Activated CD4-positive, alpha-beta T cell treated with anti-CD3 and anti-CD28 coated beads for 36 hours (primary cell): ENCODE measurements at regions of chr22 and their contacts with region 1.

Region 1: DNA sequence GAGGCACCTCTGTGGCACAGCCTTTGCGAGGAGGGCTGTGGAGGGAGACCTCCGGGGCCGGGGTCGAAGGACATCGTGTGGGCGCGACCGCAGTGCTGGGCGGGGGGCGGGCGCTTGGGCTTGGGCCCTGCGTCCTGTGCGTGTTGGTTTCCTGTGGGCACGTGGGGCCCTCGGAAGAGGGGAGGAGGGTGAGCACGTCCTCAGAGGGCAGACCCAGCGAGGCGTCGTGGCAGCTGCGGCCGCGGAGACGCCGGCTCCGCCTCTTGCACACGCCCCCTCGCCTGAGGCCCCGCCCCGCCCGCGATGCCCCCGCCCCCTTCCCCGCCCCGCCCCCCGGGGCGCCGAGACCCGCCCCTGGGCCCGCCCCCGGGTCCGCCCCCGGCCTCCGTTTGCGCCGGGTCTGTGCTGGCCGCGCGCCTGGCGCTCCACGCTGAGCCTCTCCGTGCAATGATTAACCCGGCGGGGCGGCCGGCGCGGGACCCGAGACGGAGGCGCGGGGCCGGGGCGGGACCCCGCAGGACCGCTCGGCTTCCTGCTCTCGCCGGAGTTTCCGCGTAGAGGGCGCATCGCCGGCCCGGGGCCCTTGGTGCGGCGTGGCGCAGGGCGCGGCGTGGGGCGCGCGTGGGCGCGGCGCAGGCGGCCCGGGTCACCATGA is at the start of gene PRR5:
- DNase-seq: peak; percentile 89
- ATAC-seq: peak; percentile 88
- H3K4me3 Mint-ChIP-seq: peak within 1 kb of the TSS; percentile 72
- H3K27ac Mint-ChIP-seq: no peak within 1 kb of the TSS
- H3K4me1 Mint-ChIP-seq: peaks cover 9% of the 10 kb centered on the region
- H3K27me3 Mint-ChIP-seq: no peaks in the 10 kb centered on the region
- total RNA-seq, gene PRR5: 13.6 TPM

Region 2: DNA sequence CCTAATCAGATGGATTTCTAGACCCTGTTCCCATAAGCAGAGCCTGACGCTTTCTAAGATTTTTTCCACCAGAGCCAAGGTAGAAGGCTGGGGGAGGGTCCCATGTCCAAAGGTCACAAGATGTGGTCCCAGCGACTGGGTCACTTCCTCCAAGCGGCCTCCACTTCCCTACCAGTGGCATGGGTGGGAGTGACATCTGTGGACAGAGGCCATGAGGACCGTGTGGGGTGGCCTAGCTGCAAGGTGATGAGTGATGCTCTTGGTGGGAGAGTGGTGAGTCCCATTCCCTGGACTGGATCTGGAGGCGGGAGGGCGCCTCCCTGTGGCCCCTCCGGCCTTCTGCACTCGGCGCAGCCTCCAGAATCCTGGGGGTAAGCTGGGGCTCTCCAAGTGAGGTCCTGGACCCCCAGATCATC is 32.4 kb before region 1 on chr22:
- CTCF ChIA-PET with region 1: interaction called, 4 read pairs
- POLR2A ChIA-PET with region 1: no interaction called
- intact Hi-C with region 1: loop called in 1 of 2 experiments (anchors 1 kb)
- DNase-seq: no peak
- ATAC-seq: no peak
- H3K4me3 Mint-ChIP-seq: peak overlapping the region; percentile 67
- H3K27ac Mint-ChIP-seq: no peak overlapping the region
- H3K4me1 Mint-ChIP-seq: peaks cover 37% of the 10 kb centered on the region
- H3K27me3 Mint-ChIP-seq: no peaks in the 10 kb centered on the region

Region 3: GRCh38 chr22:44735540-44736488 is 33.9 kb after region 1 on chr22:
- CTCF ChIA-PET with region 1: interaction called, 13 read pairs
- POLR2A ChIA-PET with region 1: no interaction called
- intact Hi-C with region 1: loop called (anchors 1 kb)
- DNase-seq: peak; percentile 90
- ATAC-seq: peak; percentile 81
- H3K4me3 Mint-ChIP-seq: no peak overlapping the region
- H3K27ac Mint-ChIP-seq: no peak overlapping the region
- H3K4me1 Mint-ChIP-seq: no peaks in the 10 kb centered on the region
- H3K27me3 Mint-ChIP-seq: no peaks in the 10 kb centered on the region

Region 4: GRCh38 chr22:44819971-44820631 is 118.2 kb after region 1 on chr22:
- CTCF ChIA-PET with region 1: no interaction called
- POLR2A ChIA-PET with region 1: no interaction called
- intact Hi-C with region 1: loop called in 1 of 2 experiments (anchors 1 kb)
- DNase-seq: no peak
- ATAC-seq: no peak
- H3K4me3 Mint-ChIP-seq: no peak overlapping the region
- H3K27ac Mint-ChIP-seq: no peak overlapping the region
- H3K4me1 Mint-ChIP-seq: no peaks in the 10 kb centered on the region
- H3K27me3 Mint-ChIP-seq: peaks cover 1% of the 10 kb centered on the region

Region 5: DNA sequence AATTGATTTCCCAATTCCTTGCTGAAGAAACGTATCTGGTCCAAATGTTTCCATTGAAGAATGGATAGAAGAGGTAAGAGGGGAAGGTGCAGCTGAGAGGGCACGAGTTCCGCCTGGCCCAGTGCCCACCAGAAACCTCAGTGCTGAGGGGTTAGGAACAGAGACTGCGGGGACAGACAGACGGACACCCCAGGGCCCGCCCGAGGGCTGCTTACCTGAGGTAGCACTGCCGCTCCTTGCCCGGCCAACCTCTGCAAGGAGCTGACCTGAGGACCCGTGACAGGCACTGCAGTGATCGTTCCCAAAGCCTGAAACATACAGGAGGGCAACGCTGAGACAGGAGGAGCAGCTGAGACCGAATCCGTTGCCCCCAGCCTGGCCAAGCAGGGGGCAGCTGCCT is 218.2 kb after region 1 on chr22:
- CTCF ChIA-PET with region 1: no interaction called
- POLR2A ChIA-PET with region 1: no interaction called
- intact Hi-C with region 1: no loop called
- DNase-seq: no peak
- ATAC-seq: no peak
- H3K4me3 Mint-ChIP-seq: no peak overlapping the region
- H3K27ac Mint-ChIP-seq: no peak overlapping the region
- H3K4me1 Mint-ChIP-seq: no peaks in the 10 kb centered on the region
- H3K27me3 Mint-ChIP-seq: no peaks in the 10 kb centered on the region

Region 6: DNA sequence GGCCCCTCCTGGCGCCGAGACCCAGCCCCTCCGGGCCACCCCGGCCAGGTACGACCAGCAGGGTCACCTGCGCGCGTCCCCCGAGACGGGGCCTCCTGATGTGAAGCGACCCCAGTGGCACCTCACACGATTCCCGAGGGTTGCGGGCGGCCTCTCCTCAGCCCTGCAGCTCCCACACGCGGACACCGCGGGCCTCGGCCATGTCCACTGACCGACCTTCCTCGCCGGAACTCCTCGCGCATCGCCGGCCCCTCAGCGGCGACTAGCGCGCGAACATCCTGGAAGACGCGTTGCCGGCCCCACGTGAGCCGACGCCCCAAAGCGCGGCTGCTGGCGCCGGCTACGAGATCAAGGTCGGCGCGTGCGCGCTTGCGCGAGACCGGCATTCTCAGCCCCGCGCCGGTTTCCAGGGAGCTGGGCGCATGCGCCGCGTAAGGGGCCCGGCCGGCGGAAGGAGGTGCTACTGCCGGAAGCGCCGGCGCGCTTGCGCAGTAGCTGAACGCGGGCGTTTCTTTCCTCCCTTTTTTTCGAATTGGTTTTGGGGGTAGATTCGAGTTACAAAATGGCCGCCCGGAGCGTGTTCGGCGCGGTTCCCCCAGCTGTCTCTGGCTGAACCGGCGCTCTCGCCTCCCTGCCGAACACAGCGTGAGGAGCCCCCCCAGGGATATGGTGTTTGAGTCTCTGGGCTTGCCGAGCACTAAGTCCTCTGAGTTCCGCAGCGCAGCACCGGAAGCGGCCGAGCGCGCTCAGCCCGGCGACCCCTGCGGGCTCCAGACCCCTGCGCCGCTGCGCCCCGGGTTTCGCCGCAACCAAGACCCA is 461.7 kb after region 1 on chr22 and contains the start of gene NUP50:
- CTCF ChIA-PET with region 1: no interaction called
- POLR2A ChIA-PET with region 1: no interaction called
- intact Hi-C with region 1: loop called in 1 of 2 experiments (anchors 1 kb)
- DNase-seq: peak; percentile 98
- ATAC-seq: peak; percentile 89
- H3K4me3 Mint-ChIP-seq: peak within 1 kb of the TSS; percentile 99
- H3K27ac Mint-ChIP-seq: peak within 1 kb of the TSS; percentile 97
- H3K4me1 Mint-ChIP-seq: peaks cover 56% of the 10 kb centered on the region
- H3K27me3 Mint-ChIP-seq: no peaks in the 10 kb centered on the region
- total RNA-seq, gene NUP50: 136 to 141 TPM